GM12878 (cell line): ENCODE measurements at regions of chr9 and their contacts with region 1.

Region 1: GRCh38 chr9:17810728-17811571 is 232.1 kb downstream of the SH3GL2 start:
- DNase-seq: no peak
- ATAC-seq: peak; percentile 75
- H3K4me3 ChIP-seq: no peak overlapping the region
- H3K27ac ChIP-seq: no peak overlapping the region
- H3K4me1 ChIP-seq: no peaks in the 10 kb centered on the region
- H3K27me3 ChIP-seq: no peaks in the 10 kb centered on the region
- CTCF ChIP-seq: peak; percentile 75 to 77 (median 75)
- EP300 ChIP-seq: no peak
- POLR2A ChIP-seq: no peak
- RAD21 ChIP-seq: peak; percentile 96

Region 2: GRCh38 chr9:17958363-17958762 is 147.4 kb after region 1 on chr9:
- CTCF ChIA-PET with region 1: interaction called, 3 read pairs
- POLR2A ChIA-PET with region 1: no interaction called
- RAD21 ChIA-PET with region 1: no interaction called
- SMC1A ChIA-PET with region 1: no interaction called
- in situ Hi-C with region 1: no loop called
- intact Hi-C with region 1: loop called (anchors 5 kb)
- DNase-seq: no peak
- ATAC-seq: no peak
- H3K4me3 ChIP-seq: no peak overlapping the region
- H3K27ac ChIP-seq: no peak overlapping the region
- H3K4me1 ChIP-seq: no peaks in the 10 kb centered on the region
- H3K27me3 ChIP-seq: no peaks in the 10 kb centered on the region; a peak in 1 of 4 replicates
- CTCF ChIP-seq: no peak
- EP300 ChIP-seq: no peak
- POLR2A ChIP-seq: no peak
- RAD21 ChIP-seq: no peak

Region 3: GRCh38 chr9:18208154-18209059 is 397.5 kb after region 1 on chr9:
- CTCF ChIA-PET with region 1: interaction called, 153 read pairs
- POLR2A ChIA-PET with region 1: no interaction called
- RAD21 ChIA-PET with region 1: interaction called, 50 read pairs
- SMC1A ChIA-PET with region 1: interaction called, 86 read pairs
- in situ Hi-C with region 1: loop called (anchors 5 kb)
- intact Hi-C with region 1: loop called (anchors 1 kb)
- DNase-seq: no peak
- ATAC-seq: no peak
- H3K4me3 ChIP-seq: no peak overlapping the region
- H3K27ac ChIP-seq: no peak overlapping the region
- H3K4me1 ChIP-seq: no peaks in the 10 kb centered on the region
- H3K27me3 ChIP-seq: no peaks in the 10 kb centered on the region
- CTCF ChIP-seq: peak; percentile 12 to 42 (median 36); a peak in 3 of 6 replicates
- EP300 ChIP-seq: no peak
- POLR2A ChIP-seq: no peak
- RAD21 ChIP-seq: peak; percentile 31; the same call in 1 of the 2 replicates

Region 4: GRCh38 chr9:18442629-18443491 is 631.9 kb after region 1 on chr9:
- CTCF ChIA-PET with region 1: interaction called, 13 read pairs
- POLR2A ChIA-PET with region 1: no interaction called
- RAD21 ChIA-PET with region 1: interaction called, 11 read pairs
- SMC1A ChIA-PET with region 1: interaction called, 11 read pairs
- in situ Hi-C with region 1: loop called (anchors 25 kb)
- intact Hi-C with region 1: loop called (anchors 1 kb)
- DNase-seq: no peak
- ATAC-seq: peak; percentile 98
- H3K4me3 ChIP-seq: no peak overlapping the region
- H3K27ac ChIP-seq: no peak overlapping the region
- H3K4me1 ChIP-seq: no peaks in the 10 kb centered on the region
- H3K27me3 ChIP-seq: no peaks in the 10 kb centered on the region; a peak in 1 of 4 replicates
- CTCF ChIP-seq: peak; percentile 79 to 92 (median 89)
- EP300 ChIP-seq: no peak
- POLR2A ChIP-seq: no peak
- RAD21 ChIP-seq: peak; percentile 74

Region 5: GRCh38 chr9:18555105-18555883 is 744.3 kb after region 1 on chr9:
- CTCF ChIA-PET with region 1: no interaction called
- POLR2A ChIA-PET with region 1: no interaction called
- RAD21 ChIA-PET with region 1: no interaction called
- SMC1A ChIA-PET with region 1: no interaction called
- in situ Hi-C with region 1: no loop called
- intact Hi-C with region 1: no loop called
- DNase-seq: no peak
- ATAC-seq: no peak
- H3K4me3 ChIP-seq: no peak overlapping the region
- H3K27ac ChIP-seq: no peak overlapping the region
- H3K4me1 ChIP-seq: no peaks in the 10 kb centered on the region
- H3K27me3 ChIP-seq: no peaks in the 10 kb centered on the region
- CTCF ChIP-seq: no peak
- EP300 ChIP-seq: no peak
- POLR2A ChIP-seq: no peak
- RAD21 ChIP-seq: no peak